ENCODE measurements at regions of chr12 and their contacts with region 1.

Region 1: DNA sequence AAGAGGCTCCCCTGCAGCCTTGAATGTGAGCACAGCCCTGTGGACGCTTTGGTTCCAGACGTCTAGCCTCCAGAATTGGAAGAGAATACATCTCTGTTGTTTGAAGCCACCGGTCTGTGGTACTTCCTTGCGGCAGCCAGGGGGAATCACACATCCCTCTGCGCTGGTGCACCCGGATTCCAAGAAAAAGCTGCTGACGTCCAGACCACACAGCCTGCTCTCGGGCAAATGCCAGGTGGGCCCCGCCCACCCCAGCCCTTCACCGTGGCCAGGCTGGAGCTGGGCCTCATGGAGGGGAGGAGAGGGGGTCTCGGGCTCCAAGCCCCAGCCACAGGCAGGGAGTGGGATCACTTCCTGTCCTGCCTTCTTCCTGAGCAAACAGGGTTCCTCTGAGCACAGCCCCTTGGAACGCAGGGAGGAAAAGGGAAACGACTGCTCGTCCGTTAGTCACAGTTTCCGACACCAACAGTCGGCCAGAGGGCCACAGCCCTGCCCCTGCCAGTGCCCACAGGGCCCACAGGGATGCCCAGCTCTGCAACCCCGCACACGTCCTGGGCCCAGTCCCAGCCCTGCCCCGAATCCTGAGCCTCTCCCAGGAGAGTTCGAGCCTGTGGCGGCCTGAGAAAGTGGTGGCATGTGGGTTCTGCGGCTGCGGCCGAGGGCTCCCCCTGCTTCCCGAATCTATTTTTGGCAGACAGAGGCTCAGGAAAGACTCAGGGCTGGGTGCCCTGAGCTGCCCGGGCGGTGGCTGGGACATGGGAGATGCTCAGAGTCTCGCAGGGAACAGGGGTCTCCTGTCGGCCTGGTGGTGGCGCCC is 85.3 kb downstream of the RFLNA start:
- DNase-seq: peak; percentile 71 to 85 (median 78)
- ATAC-seq: peak; percentile 36 to 71 (median 54)
- H3K4me3 ChIP-seq: peak overlapping the region in 3 of 12 donors; percentile 3 to 25 (median 23)
- H3K27ac ChIP-seq: peak overlapping the region; percentile 74 to 96 (median 86)
- H3K4me1 ChIP-seq: peaks cover 21 to 70% (median 51%) of the 10 kb centered on the region in 12 donors
- H3K27me3 ChIP-seq: no peaks in the 10 kb centered on the region
- CTCF ChIP-seq: peak; percentile 26 to 80 (median 54)
- POLR2A ChIP-seq: no peak

Region 2: GRCh38 chr12:124369055-124369900 is 10.9 kb before region 1 on chr12:
- intact Hi-C with region 1: loop called in 2 of 10 experiments (anchors 1 kb)
- DNase-seq: peak; percentile 93 to 96 (median 94)
- ATAC-seq: peak; percentile 82 to 90 (median 88)
- H3K4me3 ChIP-seq: peak overlapping the region in 2 of 12 donors; percentile 12 to 16
- H3K27ac ChIP-seq: peak overlapping the region; percentile 74 to 99 (median 94)
- H3K4me1 ChIP-seq: peaks cover 8 to 76% (median 56%) of the 10 kb centered on the region in 12 donors
- H3K27me3 ChIP-seq: no peaks in the 10 kb centered on the region
- CTCF ChIP-seq: peak; percentile 23 to 69 (median 52)
- POLR2A ChIP-seq: peak in 1 of 2 donors; percentile 14

Region 3: DNA sequence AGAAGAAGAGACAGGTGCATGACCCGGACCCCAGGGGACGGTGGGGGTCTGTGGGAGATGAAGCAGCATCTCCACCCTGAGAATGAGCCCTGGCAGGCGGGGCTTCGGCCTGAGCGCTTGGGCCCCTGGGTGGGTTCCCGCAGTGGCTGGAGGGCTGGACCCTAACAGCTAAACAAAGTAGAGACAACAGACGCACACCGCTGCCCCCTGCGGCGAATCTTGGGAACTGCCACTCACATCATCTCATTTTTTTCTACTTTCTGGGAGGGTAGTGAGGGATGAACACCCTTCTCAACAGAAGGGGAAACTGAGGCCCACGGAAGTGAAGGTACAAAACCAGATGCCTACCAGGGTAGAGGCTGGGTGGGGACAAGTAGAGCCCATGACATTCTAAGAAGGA is 19.5 kb after region 1 on chr12:
- intact Hi-C with region 1: loop called in 1 of 10 experiments (anchors 1 kb)
- DNase-seq: no peak
- ATAC-seq: no peak
- H3K4me3 ChIP-seq: no peak overlapping the region
- H3K27ac ChIP-seq: peak overlapping the region in 7 of 12 donors; percentile 49 to 96 (median 68)
- H3K4me1 ChIP-seq: peaks cover 16 to 79% (median 61%) of the 10 kb centered on the region in 12 donors
- H3K27me3 ChIP-seq: no peaks in the 10 kb centered on the region
- CTCF ChIP-seq: peak; percentile 47 to 76 (median 66)
- POLR2A ChIP-seq: no peak

Region 4: DNA sequence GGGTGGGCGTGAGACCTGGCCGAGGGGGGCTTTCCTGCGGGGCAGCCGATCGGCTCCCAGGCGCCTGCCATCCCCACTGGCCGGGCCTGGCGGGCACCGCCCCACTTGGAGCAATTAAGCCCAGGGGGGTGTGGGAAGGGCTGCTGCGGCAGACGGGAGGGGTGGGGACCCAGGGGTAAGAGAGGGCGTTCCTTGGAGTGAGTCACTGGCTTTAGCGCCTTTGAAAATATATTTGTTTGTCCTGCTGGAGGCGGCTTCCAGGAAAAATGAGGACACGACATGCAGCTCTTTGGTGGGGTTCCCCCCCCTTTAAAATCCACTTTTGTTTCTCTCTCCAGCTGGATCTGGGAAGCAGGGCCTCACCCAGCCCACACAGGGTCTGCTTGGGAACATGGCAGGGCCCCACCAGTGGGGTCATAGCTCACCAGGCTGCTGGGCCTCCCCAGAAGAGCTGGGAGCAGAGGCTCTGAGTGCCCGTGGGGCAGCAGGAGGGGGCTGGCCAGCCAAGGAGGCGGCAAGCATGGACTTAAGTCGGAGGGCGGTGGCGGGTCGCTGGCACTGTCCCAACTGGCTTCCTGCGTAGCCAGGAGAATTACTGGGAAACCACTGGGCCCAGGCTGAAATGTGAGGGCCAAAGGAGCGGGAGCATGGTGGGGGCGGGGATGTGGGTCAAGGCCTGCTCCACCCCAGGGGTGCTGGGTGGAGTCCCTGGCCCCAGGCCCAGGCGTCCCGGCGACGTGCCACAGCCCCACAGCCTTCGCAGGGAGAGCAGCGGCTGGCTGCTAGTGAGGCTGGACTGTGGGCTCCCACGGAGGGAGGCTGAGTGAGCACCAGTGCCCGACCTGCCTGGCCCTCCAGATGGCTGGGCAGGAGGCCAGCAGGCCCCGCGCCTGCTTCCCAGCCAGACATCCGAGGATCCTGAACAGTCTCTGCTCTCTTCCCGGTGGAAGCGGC is 42.7 kb after region 1 on chr12:
- intact Hi-C with region 1: loop called in 9 of 10 experiments (anchors 2 to 10 kb)
- DNase-seq: peak; percentile 93 to 95 (median 94)
- ATAC-seq: peak; percentile 72 to 85 (median 80)
- H3K4me3 ChIP-seq: peak overlapping the region in 10 of 12 donors; percentile 8 to 34 (median 16)
- H3K27ac ChIP-seq: peak overlapping the region; percentile 82 to 94 (median 90)
- H3K4me1 ChIP-seq: peaks cover 6 to 79% (median 51%) of the 10 kb centered on the region in 12 donors
- H3K27me3 ChIP-seq: no peaks in the 10 kb centered on the region
- CTCF ChIP-seq: no peak
- POLR2A ChIP-seq: no peak

Region 5: GRCh38 chr12:124441443-124442194 is 61.5 kb after region 1 on chr12:
- intact Hi-C with region 1: loop called in 1 of 10 experiments (anchors 5 kb)
- DNase-seq: no peak
- ATAC-seq: peak in 1 of 4 donors; percentile 32
- H3K4me3 ChIP-seq: no peak overlapping the region
- H3K27ac ChIP-seq: peak overlapping the region in 10 of 12 donors; percentile 11 to 79 (median 47)
- H3K4me1 ChIP-seq: peaks cover 4 to 52% (median 36%) of the 10 kb centered on the region in 12 donors
- H3K27me3 ChIP-seq: no peaks in the 10 kb centered on the region
- CTCF ChIP-seq: no peak
- POLR2A ChIP-seq: no peak

Region 6: GRCh38 chr12:124480469-124481256 is 100.5 kb after region 1 on chr12:
- intact Hi-C with region 1: loop called in 1 of 10 experiments (anchors 10 kb)
- DNase-seq: peak in 3 of 5 donors; percentile 67 to 80 (median 76)
- ATAC-seq: peak in 2 of 4 donors; percentile 30 to 49
- H3K4me3 ChIP-seq: no peak overlapping the region
- H3K27ac ChIP-seq: peak overlapping the region in 8 of 12 donors; percentile 17 to 66 (median 31)
- H3K4me1 ChIP-seq: peaks cover 5 to 57% (median 20%) of the 10 kb centered on the region in 12 donors
- H3K27me3 ChIP-seq: no peaks in the 10 kb centered on the region
- CTCF ChIP-seq: peak in 2 of 12 donors; percentile 13 to 25
- POLR2A ChIP-seq: no peak

Region 7: DNA sequence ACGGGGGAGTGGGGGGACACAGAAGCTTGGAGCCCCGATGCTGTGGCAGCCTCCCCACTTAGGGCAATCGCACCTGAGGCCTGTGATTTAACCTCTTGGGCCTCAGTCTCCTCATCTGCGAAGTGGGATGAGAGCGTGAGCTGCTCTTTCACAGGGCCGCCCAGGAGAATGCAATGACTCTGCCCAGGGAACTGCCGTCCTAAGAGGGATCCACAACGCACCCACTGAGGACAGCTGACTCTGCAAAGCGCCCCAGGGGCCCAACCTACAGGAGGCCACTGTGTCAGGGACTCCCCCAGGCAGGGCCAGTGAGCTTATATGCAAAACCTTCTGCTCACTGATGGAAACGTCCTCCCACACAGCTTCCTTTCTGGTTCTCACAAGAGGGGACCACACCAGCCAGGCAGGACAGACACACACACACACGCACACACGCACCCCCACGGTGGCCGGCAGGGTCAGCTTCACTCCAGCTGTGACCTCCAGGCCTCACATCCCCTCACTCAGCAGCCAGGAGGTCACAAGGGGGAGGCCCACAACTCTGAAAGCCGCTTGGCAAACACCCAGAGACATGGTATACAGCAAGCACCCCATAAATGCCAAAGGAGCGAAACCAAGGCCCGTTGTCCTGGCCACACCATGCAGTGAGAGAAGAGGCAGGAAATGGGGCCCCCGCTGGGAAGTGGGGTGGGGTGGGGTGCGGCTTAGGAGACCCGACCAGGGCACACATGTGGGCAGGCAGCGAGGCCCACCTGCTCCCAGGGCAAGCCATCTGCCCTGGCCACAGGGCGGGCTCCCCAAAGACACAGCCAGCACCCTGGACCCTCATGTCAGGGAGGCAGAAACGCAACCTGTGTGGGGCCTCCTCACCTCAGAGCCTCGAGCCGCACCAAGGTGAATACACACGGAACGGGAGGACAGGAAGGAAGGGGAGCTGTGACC is 113.9 kb after region 1 on chr12:
- intact Hi-C with region 1: loop called in 3 of 10 experiments (anchors 5 to 10 kb)
- DNase-seq: peak in 1 of 5 donors; percentile 47
- ATAC-seq: no peak
- H3K4me3 ChIP-seq: no peak overlapping the region
- H3K27ac ChIP-seq: no peak overlapping the region
- H3K4me1 ChIP-seq: peaks cover 31 to 91% (median 72%) of the 10 kb centered on the region in 12 donors
- H3K27me3 ChIP-seq: no peaks in the 10 kb centered on the region
- CTCF ChIP-seq: no peak
- POLR2A ChIP-seq: no peak

Measured in heart left ventricle (tissue), 16 donors.